Endothelial cell of umbilical vein (primary cell): ENCODE measurements at regions of chr7 and their contacts with region 1.

Region 1: DNA sequence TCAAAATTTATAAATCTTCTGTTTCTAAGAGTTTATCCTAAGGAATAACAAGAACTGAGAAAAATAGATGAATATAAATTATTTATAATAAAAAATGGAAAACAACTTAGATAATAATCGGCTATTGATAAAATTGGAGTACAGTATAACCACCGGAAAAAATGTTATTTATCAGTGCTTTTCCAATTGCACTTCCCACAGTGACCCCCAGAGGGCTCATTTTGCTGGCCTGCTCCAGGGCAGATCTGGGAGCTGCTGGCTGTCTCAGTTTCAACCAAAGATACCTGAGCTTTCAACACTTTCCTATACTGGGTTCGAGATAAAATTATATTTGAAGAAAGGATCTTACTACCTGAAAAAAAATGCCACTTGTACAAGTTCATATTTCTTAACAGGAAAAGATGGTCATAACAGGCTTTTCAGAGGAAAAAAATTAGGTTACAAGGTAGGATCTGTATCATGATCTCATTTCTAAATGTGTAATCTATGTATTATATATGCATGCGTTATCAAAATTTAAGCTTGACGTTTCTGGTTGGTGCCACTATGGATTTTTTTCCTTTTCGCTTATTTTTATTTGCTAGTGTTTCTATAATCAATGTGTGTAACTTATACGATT is 165.7 kb downstream of the NPSR1 start:
- DNase-seq: peak; percentile 45
- H3K4me3 ChIP-seq: no peak overlapping the region
- H3K27ac ChIP-seq: no peak overlapping the region
- H3K4me1 ChIP-seq: no peaks in the 10 kb centered on the region
- H3K27me3 ChIP-seq: peaks cover 0 to 1% of the 10 kb centered on the region in 2 experiments
- CTCF ChIP-seq: peak; percentile 76 to 78
- POLR2A ChIP-seq: no peak

Region 2: GRCh38 chr7:34133983-34134782 is 689.6 kb before region 1 on chr7:
- CTCF ChIA-PET with region 1: no interaction called
- POLR2A ChIA-PET with region 1: no interaction called
- dilution Hi-C with region 1: no loop called
- intact Hi-C with region 1: loop called (anchors 10 kb)
- DNase-seq: peak; percentile 67
- H3K4me3 ChIP-seq: no peak overlapping the region
- H3K27ac ChIP-seq: no peak overlapping the region
- H3K4me1 ChIP-seq: no peaks in the 10 kb centered on the region
- H3K27me3 ChIP-seq: peaks cover 2 to 4% of the 10 kb centered on the region in 2 experiments
- CTCF ChIP-seq: peak; percentile 64 to 76
- POLR2A ChIP-seq: no peak

Region 3: GRCh38 chr7:34675749-34676374 is 147.9 kb before region 1 on chr7:
- CTCF ChIA-PET with region 1: no interaction called
- POLR2A ChIA-PET with region 1: no interaction called
- dilution Hi-C with region 1: no loop called
- intact Hi-C with region 1: loop called (anchors 10 kb)
- DNase-seq: peak; percentile 51
- H3K4me3 ChIP-seq: no peak overlapping the region
- H3K27ac ChIP-seq: no peak overlapping the region
- H3K4me1 ChIP-seq: no peaks in the 10 kb centered on the region
- H3K27me3 ChIP-seq: no peaks in the 10 kb centered on the region
- CTCF ChIP-seq: peak; percentile 63
- POLR2A ChIP-seq: no peak

Region 4: GRCh38 chr7:34759452-34760125 is 64.2 kb before region 1 on chr7:
- CTCF ChIA-PET with region 1: interaction called, 3 read pairs
- POLR2A ChIA-PET with region 1: no interaction called
- dilution Hi-C with region 1: no loop called
- intact Hi-C with region 1: loop called (anchors 2 kb)
- DNase-seq: peak; percentile 54
- H3K4me3 ChIP-seq: no peak overlapping the region
- H3K27ac ChIP-seq: no peak overlapping the region
- H3K4me1 ChIP-seq: no peaks in the 10 kb centered on the region
- H3K27me3 ChIP-seq: peaks cover 2 to 15% of the 10 kb centered on the region in 2 experiments
- CTCF ChIP-seq: peak; percentile 50 to 54
- POLR2A ChIP-seq: no peak

Region 5: DNA sequence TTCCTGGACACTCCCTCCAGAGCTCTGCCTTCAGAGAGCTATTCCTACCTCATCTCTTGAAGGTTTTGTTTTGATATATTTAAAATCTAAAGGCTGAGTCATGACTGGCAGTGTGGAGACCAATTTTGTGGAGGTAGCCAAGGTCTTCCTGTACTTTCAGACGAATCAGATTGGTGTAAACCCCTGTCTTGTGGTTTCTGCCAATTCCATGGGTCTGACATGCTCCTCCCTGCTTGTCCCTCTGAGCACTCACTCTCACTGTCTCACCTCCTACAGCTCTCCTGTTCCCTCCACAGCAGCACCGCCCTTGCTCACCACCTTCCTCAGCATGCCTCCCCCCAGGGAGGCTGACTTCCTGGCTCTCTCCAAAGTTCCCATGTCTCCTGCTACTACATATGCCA is 14.1 kb after region 1 on chr7:
- CTCF ChIA-PET with region 1: interaction called, 17 read pairs
- POLR2A ChIA-PET with region 1: no interaction called
- dilution Hi-C with region 1: no loop called
- intact Hi-C with region 1: no loop called
- DNase-seq: no peak
- H3K4me3 ChIP-seq: peak overlapping the region in 1 of 3 experiments; percentile 10
- H3K27ac ChIP-seq: peak overlapping the region; percentile 28
- H3K4me1 ChIP-seq: peaks cover 14% of the 10 kb centered on the region
- H3K27me3 ChIP-seq: no peaks in the 10 kb centered on the region
- CTCF ChIP-seq: no peak
- POLR2A ChIP-seq: no peak

Region 6: GRCh38 chr7:34928049-34928448 is 104.3 kb after region 1 on chr7:
- CTCF ChIA-PET with region 1: interaction called, 7 read pairs
- POLR2A ChIA-PET with region 1: no interaction called
- dilution Hi-C with region 1: no loop called
- intact Hi-C with region 1: loop called (anchors 1 kb)
- DNase-seq: no peak
- H3K4me3 ChIP-seq: no peak overlapping the region
- H3K27ac ChIP-seq: no peak overlapping the region
- H3K4me1 ChIP-seq: no peaks in the 10 kb centered on the region
- H3K27me3 ChIP-seq: no peaks in the 10 kb centered on the region
- CTCF ChIP-seq: peak; percentile 32 to 44
- POLR2A ChIP-seq: no peak

Region 7: GRCh38 chr7:35537067-35538023 is 713.6 kb after region 1 on chr7:
- CTCF ChIA-PET with region 1: interaction called, 3 read pairs
- POLR2A ChIA-PET with region 1: no interaction called
- dilution Hi-C with region 1: no loop called
- intact Hi-C with region 1: loop called (anchors 1 kb)
- DNase-seq: peak; percentile 70
- H3K4me3 ChIP-seq: peak overlapping the region in 1 of 3 experiments; percentile 28
- H3K27ac ChIP-seq: no peak overlapping the region
- H3K4me1 ChIP-seq: no peaks in the 10 kb centered on the region
- H3K27me3 ChIP-seq: peaks cover 0 to 5% of the 10 kb centered on the region in 2 experiments
- CTCF ChIP-seq: peak; percentile 92 to 99
- POLR2A ChIP-seq: no peak